Naive thymus-derived CD4-positive, alpha-beta T cell (primary cell): ENCODE measurements at regions of chr2 and their contacts with region 1.

Region 1: DNA sequence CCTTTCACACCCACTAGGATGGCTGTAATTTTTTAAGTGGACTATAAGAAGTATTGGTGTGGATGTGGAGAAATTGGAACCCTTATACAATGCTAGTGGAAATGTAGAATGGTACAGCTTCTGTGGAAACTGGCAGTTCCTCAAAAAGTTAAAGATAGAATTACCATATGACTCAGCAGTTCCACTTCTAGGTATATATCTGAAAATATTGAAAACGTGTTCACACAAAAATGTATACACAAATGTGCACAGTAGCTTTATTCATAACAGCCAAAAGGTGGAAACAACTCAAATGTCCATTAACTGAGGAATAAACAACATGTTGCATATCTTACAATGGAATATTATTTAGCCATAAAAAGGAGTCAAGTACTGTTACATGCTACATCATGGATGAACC is 17.7 kb downstream of the TANK start:
- DNase-seq: no peak
- ATAC-seq: no peak
- H3K4me3 ChIP-seq: no peak overlapping the region
- H3K4me3 Mint-ChIP-seq: no peak overlapping the region
- H3K27ac ChIP-seq: no peak overlapping the region
- H3K27ac Mint-ChIP-seq: no peak overlapping the region
- H3K4me1 ChIP-seq: peaks cover 0 to 5% of the 10 kb centered on the region in 2 donors
- H3K4me1 Mint-ChIP-seq: peaks cover 17 to 44% (median 33%) of the 10 kb centered on the region in 7 donors
- H3K27me3 ChIP-seq: no peaks in the 10 kb centered on the region
- H3K27me3 Mint-ChIP-seq: no peaks in the 10 kb centered on the region

Region 2: DNA sequence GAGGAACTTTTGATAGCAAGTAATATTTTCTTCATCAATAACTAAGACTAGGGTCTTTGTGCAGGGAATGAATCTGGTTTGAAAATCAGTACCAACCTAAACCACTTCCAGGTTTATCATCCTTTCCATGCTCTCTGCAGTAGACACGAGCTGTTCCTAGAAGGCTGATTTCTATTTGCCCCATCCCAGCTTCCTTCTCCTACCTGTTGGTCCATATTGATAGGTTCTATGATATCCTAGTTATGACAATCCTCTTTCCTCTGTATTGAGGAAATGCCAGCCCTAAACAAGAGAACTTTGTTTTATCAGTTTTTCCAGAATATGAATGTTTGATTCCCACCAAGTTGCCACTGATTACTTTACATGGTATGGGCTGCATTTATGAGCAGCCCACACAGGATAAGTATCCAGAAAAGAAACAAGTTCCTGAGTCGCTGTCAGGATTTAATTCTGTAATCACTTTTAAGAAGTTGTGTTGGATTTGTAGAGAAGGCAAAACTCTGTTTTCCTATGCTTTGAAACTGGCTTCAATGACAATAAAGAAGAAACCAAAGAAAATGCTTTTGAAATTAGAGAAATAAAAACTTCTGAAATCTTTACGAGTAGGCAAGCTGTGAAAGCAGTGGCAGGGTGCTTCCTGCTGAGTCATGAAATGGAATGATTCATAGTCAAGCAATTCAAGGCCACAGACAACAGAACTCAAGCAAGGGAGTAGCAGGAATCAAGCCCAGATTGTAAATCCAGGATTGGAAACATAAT is 55.0 kb before region 1 on chr2:
- CTCF ChIA-PET with region 1: no interaction called
- POLR2A ChIA-PET with region 1: no interaction called
- intact Hi-C with region 1: no loop called
- DNase-seq: no peak
- ATAC-seq: peak; percentile 73
- H3K4me3 ChIP-seq: no peak overlapping the region
- H3K4me3 Mint-ChIP-seq: peak overlapping the region in 1 of 10 donors; percentile 40
- H3K27ac ChIP-seq: no peak overlapping the region
- H3K27ac Mint-ChIP-seq: no peak overlapping the region
- H3K4me1 ChIP-seq: no peaks in the 10 kb centered on the region
- H3K4me1 Mint-ChIP-seq: peaks cover 0 to 36% (median 4%) of the 10 kb centered on the region in 7 donors
- H3K27me3 ChIP-seq: no peaks in the 10 kb centered on the region
- H3K27me3 Mint-ChIP-seq: peaks cover 0 to 6% (median 0%) of the 10 kb centered on the region in 5 donors

Region 3: DNA sequence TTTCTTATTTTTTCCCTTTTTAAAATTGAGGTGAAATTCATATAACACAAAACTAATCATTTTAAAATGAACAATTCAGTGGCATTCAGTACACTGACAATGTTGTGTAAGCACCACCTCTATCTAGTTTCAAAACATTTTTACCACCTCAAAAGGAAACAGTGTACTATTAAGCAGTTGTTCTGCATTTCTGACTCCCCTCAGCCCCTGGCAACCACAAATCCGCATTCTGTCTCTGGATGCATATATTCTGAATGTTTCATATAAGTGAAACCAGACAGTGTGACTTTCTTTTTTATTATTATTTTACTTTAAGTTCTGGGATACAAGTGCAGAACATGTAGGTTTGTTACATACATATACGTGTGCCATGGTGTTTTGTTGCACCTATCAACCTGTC is 36.9 kb before region 1 on chr2:
- CTCF ChIA-PET with region 1: no interaction called
- POLR2A ChIA-PET with region 1: no interaction called
- intact Hi-C with region 1: no loop called
- DNase-seq: no peak
- ATAC-seq: no peak
- H3K4me3 ChIP-seq: no peak overlapping the region
- H3K4me3 Mint-ChIP-seq: peak overlapping the region in 8 of 10 donors; percentile 0 to 83 (median 53)
- H3K27ac ChIP-seq: no peak overlapping the region
- H3K27ac Mint-ChIP-seq: peak overlapping the region in 6 of 9 donors; percentile 2 to 77 (median 18)
- H3K4me1 ChIP-seq: peaks cover 10 to 28% of the 10 kb centered on the region in 2 donors
- H3K4me1 Mint-ChIP-seq: peaks cover 37 to 93% (median 79%) of the 10 kb centered on the region in 7 donors
- H3K27me3 ChIP-seq: no peaks in the 10 kb centered on the region
- H3K27me3 Mint-ChIP-seq: no peaks in the 10 kb centered on the region

Region 4: GRCh38 chr2:161193633-161194032 is 15.7 kb after region 1 on chr2:
- CTCF ChIA-PET with region 1: no interaction called
- POLR2A ChIA-PET with region 1: no interaction called
- intact Hi-C with region 1: loop called in 1 of 2 experiments (anchors 2 kb)
- DNase-seq: no peak
- ATAC-seq: no peak
- H3K4me3 ChIP-seq: no peak overlapping the region
- H3K4me3 Mint-ChIP-seq: no peak overlapping the region
- H3K27ac ChIP-seq: no peak overlapping the region
- H3K27ac Mint-ChIP-seq: no peak overlapping the region
- H3K4me1 ChIP-seq: peaks cover 4 to 8% of the 10 kb centered on the region in 2 donors
- H3K4me1 Mint-ChIP-seq: peaks cover 39 to 80% (median 57%) of the 10 kb centered on the region in 7 donors
- H3K27me3 ChIP-seq: no peaks in the 10 kb centered on the region
- H3K27me3 Mint-ChIP-seq: no peaks in the 10 kb centered on the region